ENCODE measurements at regions of chr17 and their contacts with region 1.

Region 1: GRCh38 chr17:82273327-82274133 is at the start of gene CSNK1D:
- DNase-seq: peak; percentile 85
- H3K4me3 ChIP-seq: peak within 1 kb of the TSS; percentile 74 to 84 (median 81)
- H3K27ac ChIP-seq: peak within 1 kb of the TSS; percentile 69
- H3K4me1 ChIP-seq: peaks cover 33% of the 10 kb centered on the region
- H3K27me3 ChIP-seq: no peaks in the 10 kb centered on the region
- CTCF ChIP-seq: no peak
- total RNA-seq, gene CSNK1D: 68.7 to 163 TPM

Region 2: DNA sequence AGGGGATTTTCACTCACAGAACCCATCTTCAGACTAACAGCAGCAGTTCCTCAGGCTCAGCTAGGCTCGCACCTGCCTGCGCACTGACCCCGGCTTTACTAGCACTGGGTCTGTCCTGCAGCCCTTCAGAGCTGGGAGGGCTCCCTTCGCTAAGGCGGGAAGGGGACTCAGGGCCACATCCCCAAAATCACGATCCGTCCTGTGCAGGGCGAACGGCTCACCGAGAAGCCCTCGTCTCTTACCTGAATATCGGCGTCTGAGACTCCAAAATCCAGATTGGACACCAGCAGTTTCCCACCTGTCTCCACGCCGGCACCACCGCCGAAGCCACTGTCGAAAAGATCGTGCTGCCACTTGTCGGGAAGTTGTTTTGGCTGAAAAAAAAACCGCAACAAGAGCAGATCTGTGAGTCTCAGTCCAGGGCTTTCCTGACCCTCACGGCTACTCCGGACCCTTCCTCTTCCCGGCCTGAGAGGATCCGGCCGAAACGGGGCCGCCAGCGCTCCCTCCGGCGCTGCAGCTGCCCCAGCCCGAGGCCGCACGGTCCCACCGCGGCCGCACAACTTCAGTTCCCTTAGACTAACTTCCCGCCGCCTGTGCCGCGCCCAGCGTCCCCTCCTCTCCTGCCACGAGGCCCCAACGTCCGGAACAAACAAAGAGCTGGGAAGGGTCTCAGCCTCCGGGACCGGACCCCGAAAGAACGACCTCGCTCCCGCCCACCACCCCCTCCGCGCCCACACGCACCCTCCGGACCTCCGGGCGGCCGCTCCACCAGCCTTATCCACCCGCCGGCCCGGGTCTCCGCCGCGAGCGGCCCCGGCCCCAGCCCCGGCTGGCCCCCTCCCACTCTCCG is 382.9 kb before region 1 on chr17:
- CTCF ChIA-PET with region 1: no interaction called
- dilution Hi-C with region 1: loop called (anchors 10 kb)
- in situ Hi-C with region 1: no loop called
- intact Hi-C with region 1: no loop called
- DNase-seq: no peak
- H3K4me3 ChIP-seq: peak overlapping the region; percentile 80 to 88 (median 87)
- H3K27ac ChIP-seq: peak overlapping the region; percentile 77
- H3K4me1 ChIP-seq: peaks cover 21% of the 10 kb centered on the region
- H3K27me3 ChIP-seq: no peaks in the 10 kb centered on the region
- CTCF ChIP-seq: no peak

Region 3: DNA sequence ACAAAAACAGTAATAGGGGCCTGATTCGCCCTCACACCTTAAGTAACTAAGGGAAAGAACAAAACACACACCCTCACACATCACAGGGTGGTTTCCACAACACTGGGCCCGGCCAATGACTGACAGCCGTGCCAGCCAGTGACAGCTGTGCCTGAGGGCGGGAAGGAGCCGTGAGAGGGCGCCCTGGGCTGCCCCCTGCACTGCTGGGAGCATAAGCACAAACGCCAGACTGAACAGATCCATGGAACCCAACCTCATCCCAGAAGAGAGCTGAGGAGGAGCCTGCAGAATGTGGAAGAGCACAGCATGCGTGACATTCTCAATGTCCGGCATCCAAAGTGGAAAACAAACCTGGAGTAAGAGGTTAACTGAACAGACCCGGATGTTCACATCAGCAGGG is 16.1 kb before region 1 on chr17:
- CTCF ChIA-PET with region 1: no interaction called
- dilution Hi-C with region 1: no loop called
- in situ Hi-C with region 1: no loop called
- intact Hi-C with region 1: no loop called
- DNase-seq: peak; percentile 67
- H3K4me3 ChIP-seq: no peak overlapping the region
- H3K27ac ChIP-seq: peak overlapping the region; percentile 33
- H3K4me1 ChIP-seq: no peaks in the 10 kb centered on the region
- H3K27me3 ChIP-seq: no peaks in the 10 kb centered on the region
- CTCF ChIP-seq: no peak

Region 4: GRCh38 chr17:82320956-82321927 is 47.7 kb after region 1 on chr17:
- CTCF ChIA-PET with region 1: no interaction called
- dilution Hi-C with region 1: no loop called
- in situ Hi-C with region 1: no loop called
- intact Hi-C with region 1: loop called (anchors 1 kb)
- DNase-seq: no peak
- H3K4me3 ChIP-seq: peak overlapping the region in 1 of 3 experiments; percentile 21
- H3K27ac ChIP-seq: no peak overlapping the region
- H3K4me1 ChIP-seq: peaks cover 16% of the 10 kb centered on the region
- H3K27me3 ChIP-seq: no peaks in the 10 kb centered on the region
- CTCF ChIP-seq: peak; percentile 42 to 73

Region 5: GRCh38 chr17:82332669-82333278 is 59.2 kb after region 1 on chr17:
- CTCF ChIA-PET with region 1: no interaction called
- dilution Hi-C with region 1: loop called (anchors 10 kb)
- in situ Hi-C with region 1: no loop called
- intact Hi-C with region 1: no loop called
- DNase-seq: peak; percentile 46
- H3K4me3 ChIP-seq: peak overlapping the region in 2 of 3 experiments; percentile 18 to 46
- H3K27ac ChIP-seq: no peak overlapping the region
- H3K4me1 ChIP-seq: peaks cover 46% of the 10 kb centered on the region
- H3K27me3 ChIP-seq: no peaks in the 10 kb centered on the region
- CTCF ChIP-seq: no peak